ENCODE measurements at regions of chr2 and their contacts with region 1.

Region 1: DNA sequence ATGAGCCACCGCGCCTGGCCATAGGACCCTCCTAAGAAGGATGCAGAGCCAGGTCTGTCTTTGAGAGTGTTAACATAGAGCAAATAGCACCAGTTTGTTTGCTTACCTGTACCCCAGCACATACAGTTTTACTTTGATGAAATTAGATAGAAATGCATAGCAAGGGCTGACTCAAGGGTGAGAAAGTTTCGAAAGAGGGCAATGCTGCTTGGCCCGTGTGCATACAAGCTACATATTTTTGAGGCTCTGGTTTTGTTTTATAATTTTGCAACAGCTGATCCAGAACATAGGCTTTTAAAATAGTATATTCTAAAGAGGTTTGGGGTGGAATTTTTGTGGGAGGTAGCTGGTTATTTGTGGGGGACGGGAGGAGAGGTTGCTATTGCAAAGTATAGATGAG is 151.7 kb downstream of the MCFD2 start:
- DNase-seq: no peak

Region 2: GRCh38 chr2:46737577-46737976 is 26.3 kb before region 1 on chr2:
- CTCF ChIA-PET with region 1: no interaction called
- POLR2A ChIA-PET with region 1: no interaction called
- DNase-seq: no peak

Region 3: DNA sequence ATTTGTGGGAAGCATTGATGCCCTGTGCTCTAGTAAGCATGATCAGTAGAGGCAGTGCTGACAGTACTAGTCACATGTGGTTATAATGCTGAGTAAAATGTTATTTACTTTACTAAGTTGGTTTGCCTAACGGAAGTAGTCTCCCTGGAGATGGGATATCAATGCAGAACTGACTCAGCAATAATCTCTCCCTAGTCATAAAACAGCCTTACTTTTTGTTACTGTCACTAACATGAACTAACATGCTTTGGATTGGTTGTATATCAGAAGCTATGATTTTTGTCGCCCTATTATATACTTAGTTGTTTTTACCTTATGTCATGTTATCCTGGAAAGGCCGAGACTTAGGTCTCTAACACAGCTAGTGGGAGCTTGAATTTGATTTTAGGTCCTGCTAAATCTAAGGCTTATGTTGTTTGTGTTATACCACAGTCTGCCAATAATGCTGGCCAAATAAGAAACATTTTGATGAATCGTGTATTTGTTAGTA is 14.8 kb before region 1 on chr2:
- CTCF ChIA-PET with region 1: no interaction called
- POLR2A ChIA-PET with region 1: no interaction called
- DNase-seq: no peak

Region 4: DNA sequence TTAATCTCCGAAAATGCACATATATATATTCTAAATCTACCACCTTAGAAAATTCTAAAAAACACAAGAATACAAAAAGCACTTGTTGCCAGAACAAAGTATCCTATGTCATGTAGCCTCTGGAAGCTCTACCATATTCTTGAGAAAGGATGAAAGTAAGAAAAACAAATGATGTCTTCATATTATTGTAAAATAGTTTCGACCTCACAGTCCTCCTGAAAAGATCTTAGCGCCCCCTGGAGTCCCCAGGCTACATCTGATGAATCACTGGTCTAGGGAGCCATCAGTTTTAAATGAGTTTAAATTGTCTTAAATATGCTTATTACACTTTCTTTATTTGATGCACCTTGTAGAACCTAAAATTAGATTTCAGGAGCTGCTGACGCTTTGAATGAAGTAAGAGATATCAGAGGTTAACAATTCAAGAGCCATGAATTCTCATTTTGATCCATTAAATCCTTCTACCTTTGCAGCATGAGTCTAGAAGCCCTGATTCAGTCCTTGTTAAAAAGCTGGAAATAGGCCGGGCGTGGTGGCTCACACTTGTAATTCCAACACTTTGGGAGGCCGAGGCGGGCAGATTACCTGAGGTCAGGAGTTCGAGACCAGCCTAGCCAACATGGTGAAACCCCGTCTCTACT is 12.9 kb after region 1 on chr2:
- CTCF ChIA-PET with region 1: interaction called, 13 read pairs
- POLR2A ChIA-PET with region 1: no interaction called
- DNase-seq: peak; percentile 51

Measured in HEK293T (cell line).